ENCODE measurements at regions of chr18 and their contacts with region 1.

Region 1: GRCh38 chr18:59697236-59697932 is at the start of gene CCBE1:
- DNase-seq: peak; percentile 92
- ATAC-seq: peak; percentile 80
- H3K4me3 Mint-ChIP-seq: peak within 1 kb of the TSS; percentile 72
- H3K27ac Mint-ChIP-seq: no peak within 1 kb of the TSS
- H3K4me1 Mint-ChIP-seq: peaks cover 72% of the 10 kb centered on the region
- H3K27me3 Mint-ChIP-seq: peaks cover 64% of the 10 kb centered on the region
- CTCF ChIP-seq: peak; percentile 95
- total RNA-seq, gene CCBE1: 8.0 to 9.7 TPM (median 9.7 TPM) in 3 replicates

Region 2: GRCh38 chr18:59402432-59403090 is 294.8 kb before region 1 on chr18:
- CTCF ChIA-PET with region 1: interaction called, 12 read pairs
- POLR2A ChIA-PET with region 1: no interaction called
- DNase-seq: peak; percentile 88
- ATAC-seq: peak; percentile 100
- H3K4me3 Mint-ChIP-seq: no peak overlapping the region
- H3K27ac Mint-ChIP-seq: no peak overlapping the region
- H3K4me1 Mint-ChIP-seq: peaks cover 5% of the 10 kb centered on the region
- H3K27me3 Mint-ChIP-seq: peaks cover 8% of the 10 kb centered on the region
- CTCF ChIP-seq: peak; percentile 71

Region 3: DNA sequence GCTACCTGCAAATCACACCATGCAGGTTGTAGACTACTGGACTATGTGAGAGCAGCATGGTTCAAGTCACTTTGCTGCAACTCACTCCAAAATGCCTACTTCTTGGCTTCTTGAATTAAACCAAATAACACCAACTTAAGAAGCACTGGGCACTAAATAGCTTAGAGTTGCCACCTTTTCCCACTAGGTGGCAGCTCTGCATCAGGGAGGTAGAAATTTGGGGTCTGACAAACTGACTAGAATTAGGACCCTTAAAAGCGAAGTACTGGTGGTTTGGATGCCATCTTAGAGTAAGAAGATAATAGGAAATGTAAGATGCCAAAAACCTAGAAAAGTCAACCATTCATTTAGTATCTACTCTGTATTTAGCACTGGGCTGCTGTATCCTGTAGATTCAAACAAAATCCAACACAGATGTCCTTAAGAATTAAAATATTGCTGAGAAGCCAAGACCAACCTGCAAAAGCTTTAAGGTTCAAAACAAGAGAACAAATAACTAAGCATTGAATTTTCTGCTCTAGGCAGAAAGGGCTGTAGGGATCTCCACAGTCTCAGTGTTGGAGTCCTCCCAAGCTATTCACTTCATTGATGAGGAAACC is 65.7 kb before region 1 on chr18:
- CTCF ChIA-PET with region 1: interaction called, 94 read pairs
- POLR2A ChIA-PET with region 1: no interaction called
- DNase-seq: peak; percentile 51
- ATAC-seq: peak; percentile 78
- H3K4me3 Mint-ChIP-seq: no peak overlapping the region
- H3K27ac Mint-ChIP-seq: no peak overlapping the region
- H3K4me1 Mint-ChIP-seq: peaks cover 23% of the 10 kb centered on the region
- H3K27me3 Mint-ChIP-seq: no peaks in the 10 kb centered on the region
- CTCF ChIP-seq: peak; percentile 59

Region 4: DNA sequence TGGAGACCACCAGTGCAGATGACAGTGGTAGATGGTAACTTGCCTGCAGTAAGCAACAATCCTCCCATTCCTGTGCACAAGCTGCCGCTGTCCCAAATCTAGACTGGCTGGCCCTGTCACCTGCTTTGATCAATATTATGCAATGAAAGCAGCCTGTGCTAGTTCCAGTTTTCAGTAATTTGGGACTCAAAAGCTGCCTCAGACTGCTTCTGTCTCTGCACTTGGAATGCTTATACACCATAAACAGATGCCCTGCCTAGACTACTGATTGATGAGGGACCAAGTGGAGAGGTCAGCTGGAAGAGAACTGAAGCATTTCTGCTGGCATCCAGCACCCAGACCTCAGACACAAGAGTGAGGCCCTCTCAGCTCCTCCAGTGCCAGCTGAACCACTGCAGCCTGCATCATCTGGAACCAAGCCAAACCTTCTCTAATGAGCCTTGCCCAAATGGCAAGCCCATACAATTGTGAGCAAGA is 25.1 kb before region 1 on chr18:
- CTCF ChIA-PET with region 1: interaction called, 13 read pairs
- POLR2A ChIA-PET with region 1: no interaction called
- DNase-seq: no peak
- ATAC-seq: no peak
- H3K4me3 Mint-ChIP-seq: no peak overlapping the region
- H3K27ac Mint-ChIP-seq: no peak overlapping the region
- H3K4me1 Mint-ChIP-seq: no peaks in the 10 kb centered on the region
- H3K27me3 Mint-ChIP-seq: no peaks in the 10 kb centered on the region; the same call in 1 of the 2 replicates
- CTCF ChIP-seq: no peak

Region 5: GRCh38 chr18:59740141-59740540 is 42.8 kb after region 1 on chr18:
- CTCF ChIA-PET with region 1: interaction called, 12 read pairs
- POLR2A ChIA-PET with region 1: no interaction called
- DNase-seq: no peak
- ATAC-seq: no peak
- H3K4me3 Mint-ChIP-seq: no peak overlapping the region
- H3K27ac Mint-ChIP-seq: no peak overlapping the region
- H3K4me1 Mint-ChIP-seq: no peaks in the 10 kb centered on the region
- H3K27me3 Mint-ChIP-seq: peaks cover 3% of the 10 kb centered on the region; the same call in 1 of the 2 replicates
- CTCF ChIP-seq: no peak

Region 6: GRCh38 chr18:59814891-59815290 is 117.5 kb after region 1 on chr18:
- CTCF ChIA-PET with region 1: interaction called, 13 read pairs
- POLR2A ChIA-PET with region 1: no interaction called
- DNase-seq: no peak
- ATAC-seq: no peak
- H3K4me3 Mint-ChIP-seq: no peak overlapping the region
- H3K27ac Mint-ChIP-seq: no peak overlapping the region
- H3K4me1 Mint-ChIP-seq: no peaks in the 10 kb centered on the region
- H3K27me3 Mint-ChIP-seq: no peaks in the 10 kb centered on the region
- CTCF ChIP-seq: no peak

Region 7: DNA sequence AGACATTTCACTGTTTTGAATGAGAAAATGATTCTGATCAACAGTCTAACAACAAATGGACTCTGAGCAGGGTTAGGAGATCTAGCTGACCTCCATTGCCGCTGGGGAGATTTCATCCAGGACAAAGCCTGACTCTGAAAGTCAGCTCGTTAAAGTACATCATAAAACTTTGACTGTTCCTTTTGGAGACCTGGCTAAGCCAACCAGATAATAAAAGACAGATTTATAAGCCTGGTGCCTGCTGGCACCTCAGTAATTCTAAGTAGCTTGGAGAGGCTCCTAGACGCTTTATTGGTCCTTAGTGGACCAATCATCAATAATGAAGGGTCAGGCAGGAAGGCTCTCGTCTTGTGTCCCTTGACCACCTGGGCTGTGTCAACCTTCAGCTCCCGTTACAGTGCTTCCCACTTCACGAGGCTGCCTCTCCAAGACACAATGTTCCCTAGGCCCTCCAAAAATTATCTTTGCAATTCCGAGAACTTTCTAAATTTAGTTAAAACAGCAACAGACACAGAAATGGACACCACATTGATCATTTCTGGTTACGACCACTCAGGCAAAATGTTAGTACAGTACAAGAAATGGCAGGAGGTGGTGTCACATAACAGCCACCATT is 154.5 kb after region 1 on chr18:
- CTCF ChIA-PET with region 1: no interaction called
- POLR2A ChIA-PET with region 1: no interaction called
- DNase-seq: no peak
- ATAC-seq: no peak
- H3K4me3 Mint-ChIP-seq: no peak overlapping the region
- H3K27ac Mint-ChIP-seq: no peak overlapping the region; the same call in 1 of the 2 replicates
- H3K4me1 Mint-ChIP-seq: peaks cover 21% of the 10 kb centered on the region
- H3K27me3 Mint-ChIP-seq: no peaks in the 10 kb centered on the region; the same call in 1 of the 2 replicates
- CTCF ChIP-seq: no peak

Measured in WTC11 (cell line).